PC-3 (cell line): ENCODE measurements at regions of chr12 and their contacts with region 1.

Region 1: GRCh38 chr12:48084066-48084465 is 21.8 kb downstream of the SENP1 start:
- DNase-seq: peak; percentile 25
- ATAC-seq: peak; percentile 27; the same call in 1 of the 2 replicates
- H3K4me3 ChIP-seq: no peak overlapping the region
- H3K27ac ChIP-seq: no peak overlapping the region
- H3K4me1 ChIP-seq: no peaks in the 10 kb centered on the region
- H3K27me3 ChIP-seq: no peaks in the 10 kb centered on the region
- CTCF ChIP-seq: peak; percentile 51

Region 2: GRCh38 chr12:47767216-47767724 is 316.8 kb before region 1 on chr12:
- CTCF ChIA-PET with region 1: no interaction called
- POLR2A ChIA-PET with region 1: no interaction called
- intact Hi-C with region 1: no loop called
- DNase-seq: peak; percentile 64
- ATAC-seq: peak; percentile 24; the same call in 1 of the 2 replicates
- H3K4me3 ChIP-seq: no peak overlapping the region
- H3K27ac ChIP-seq: no peak overlapping the region
- H3K4me1 ChIP-seq: peaks cover 13% of the 10 kb centered on the region
- H3K27me3 ChIP-seq: no peaks in the 10 kb centered on the region
- CTCF ChIP-seq: peak; percentile 78

Region 3: GRCh38 chr12:48017496-48017895 is 66.6 kb before region 1 on chr12:
- CTCF ChIA-PET with region 1: no interaction called
- POLR2A ChIA-PET with region 1: no interaction called
- intact Hi-C with region 1: no loop called
- DNase-seq: no peak
- ATAC-seq: no peak
- H3K4me3 ChIP-seq: no peak overlapping the region
- H3K27ac ChIP-seq: no peak overlapping the region
- H3K4me1 ChIP-seq: peaks cover 15% of the 10 kb centered on the region
- H3K27me3 ChIP-seq: no peaks in the 10 kb centered on the region
- CTCF ChIP-seq: no peak

Region 4: DNA sequence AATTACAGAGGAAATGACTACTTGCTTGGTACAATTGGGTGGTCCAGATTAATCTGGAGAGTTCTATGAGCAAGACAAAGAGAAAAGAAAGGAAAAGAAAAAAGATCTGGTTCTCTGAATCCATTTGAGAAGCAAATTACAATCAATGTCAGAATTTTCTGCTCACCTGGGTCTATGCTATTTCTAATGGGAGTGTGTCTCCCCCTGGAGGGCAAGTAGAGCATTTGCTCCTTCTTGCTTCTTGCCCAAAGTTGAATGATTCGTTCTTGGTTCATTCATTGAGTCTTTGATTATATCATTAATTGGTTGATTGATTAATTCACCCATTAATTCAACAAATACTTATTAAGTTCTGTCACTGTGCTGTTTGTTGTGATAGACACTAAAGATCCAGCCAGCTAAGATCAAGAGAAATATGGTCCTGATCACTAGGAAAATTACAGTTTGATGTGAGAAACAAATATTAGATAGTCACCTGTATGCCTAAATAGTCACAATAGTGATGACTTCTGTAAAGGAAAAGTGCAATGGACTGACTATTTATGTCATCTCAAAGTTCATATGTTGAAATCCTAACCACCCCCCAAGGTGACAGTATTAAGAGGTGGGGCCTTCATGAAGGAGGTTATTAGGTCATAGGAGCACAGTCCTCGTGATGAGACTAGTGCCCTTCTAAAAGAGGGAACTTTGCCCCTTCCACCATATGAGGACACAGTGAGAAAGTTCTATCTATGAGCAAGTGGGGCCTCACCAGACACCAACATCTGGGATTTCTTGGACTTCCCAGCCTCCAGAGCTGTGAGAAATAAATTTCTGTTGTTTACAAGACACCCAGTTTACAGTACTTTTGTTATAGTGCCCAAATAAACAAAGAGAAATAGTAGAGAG is 81.3 kb after region 1 on chr12:
- CTCF ChIA-PET with region 1: no interaction called
- POLR2A ChIA-PET with region 1: no interaction called
- intact Hi-C with region 1: loop called (anchors 1 kb)
- DNase-seq: peak; percentile 69
- ATAC-seq: peak; percentile 51
- H3K4me3 ChIP-seq: no peak overlapping the region
- H3K27ac ChIP-seq: no peak overlapping the region
- H3K4me1 ChIP-seq: no peaks in the 10 kb centered on the region
- H3K27me3 ChIP-seq: no peaks in the 10 kb centered on the region
- CTCF ChIP-seq: peak; percentile 93

Region 5: GRCh38 chr12:48189331-48190125 is 105.5 kb after region 1 on chr12:
- CTCF ChIA-PET with region 1: no interaction called
- POLR2A ChIA-PET with region 1: no interaction called
- intact Hi-C with region 1: loop called (anchors 1 kb)
- DNase-seq: peak; percentile 85
- ATAC-seq: peak; percentile 82
- H3K4me3 ChIP-seq: no peak overlapping the region
- H3K27ac ChIP-seq: no peak overlapping the region
- H3K4me1 ChIP-seq: peaks cover 19% of the 10 kb centered on the region
- H3K27me3 ChIP-seq: no peaks in the 10 kb centered on the region
- CTCF ChIP-seq: peak; percentile 87

Region 6: DNA sequence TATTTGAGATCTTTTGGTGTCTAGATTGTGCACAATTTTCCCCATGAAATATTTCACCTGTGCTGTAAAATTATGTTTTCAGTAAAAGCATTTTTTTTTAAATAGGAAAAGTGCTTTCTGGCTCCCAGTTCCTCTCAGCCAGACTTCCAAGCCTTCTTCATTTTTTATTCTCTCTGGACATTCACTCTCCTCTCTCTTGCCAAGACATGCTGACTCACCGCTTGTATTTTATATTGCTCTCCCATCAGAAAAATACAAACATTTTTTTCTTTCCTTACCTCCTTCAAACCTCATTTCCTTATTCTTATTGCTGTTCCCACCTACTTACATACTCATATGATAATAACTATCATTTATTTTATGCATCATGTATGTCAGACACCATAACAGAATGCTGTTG is 304.4 kb after region 1 on chr12:
- CTCF ChIA-PET with region 1: no interaction called
- POLR2A ChIA-PET with region 1: no interaction called
- intact Hi-C with region 1: no loop called
- DNase-seq: peak; percentile 37
- ATAC-seq: peak; percentile 60
- H3K4me3 ChIP-seq: no peak overlapping the region
- H3K27ac ChIP-seq: no peak overlapping the region
- H3K4me1 ChIP-seq: peaks cover 6% of the 10 kb centered on the region; the same call in 1 of the 2 replicates
- H3K27me3 ChIP-seq: peaks cover 25% of the 10 kb centered on the region
- CTCF ChIP-seq: no peak